Calu3 (cell line): ENCODE measurements at regions of chr6 and their contacts with region 1.

Region 1: DNA sequence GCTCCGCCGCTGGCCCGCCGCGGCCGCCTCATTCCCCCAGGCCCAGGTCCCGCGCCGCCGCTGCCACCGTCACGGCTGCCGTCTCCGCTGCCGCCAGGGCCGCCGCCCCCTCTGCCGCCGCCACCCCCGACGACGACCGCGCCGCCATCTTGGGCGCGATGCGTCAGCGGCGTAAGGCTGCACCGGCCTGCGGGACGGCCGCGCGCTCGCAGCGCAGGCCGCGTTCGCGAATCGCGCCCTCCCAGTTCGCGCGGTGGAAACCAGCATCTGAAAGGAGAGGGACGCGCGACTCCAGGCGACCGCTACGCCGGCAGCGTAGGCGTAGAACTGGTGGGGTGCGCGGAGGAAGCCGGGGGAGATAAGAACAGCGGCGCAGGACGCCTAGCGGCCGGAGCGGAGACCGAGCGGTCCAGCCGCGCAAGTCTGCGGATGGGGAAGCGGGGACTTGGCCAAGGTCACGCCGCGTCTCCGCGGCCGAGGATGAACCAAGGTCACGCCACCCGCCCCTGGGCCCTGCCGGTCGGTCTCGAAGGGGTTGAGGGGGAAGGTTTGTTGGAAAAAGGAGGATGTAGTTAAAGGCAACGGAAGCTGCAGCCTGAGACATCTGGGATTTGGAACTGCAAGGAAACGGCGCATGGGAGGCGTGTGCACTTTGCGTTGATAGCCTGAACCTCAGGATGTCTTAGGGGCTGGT is at the start of gene NUDT3:
- DNase-seq: peak; percentile 98
- H3K4me3 Mint-ChIP-seq: no peak within 1 kb of the TSS
- H3K27ac Mint-ChIP-seq: peak within 1 kb of the TSS; percentile 5
- H3K4me1 Mint-ChIP-seq: peaks cover 9% of the 10 kb centered on the region
- H3K27me3 Mint-ChIP-seq: no peaks in the 10 kb centered on the region
- CTCF ChIP-seq: peak; percentile 94
- total RNA-seq, gene NUDT3: 43.9 and 48.4 TPM in 2 replicates

Region 2: GRCh38 chr6:34248727-34249551 is 143.7 kb before region 1 on chr6 and contains the start of gene SMIM29:
- CTCF ChIA-PET with region 1: interaction called, 30 read pairs
- intact Hi-C with region 1: loop called (anchors 1 kb)
- DNase-seq: peak; percentile 100
- H3K4me3 Mint-ChIP-seq: peak within 1 kb of the TSS; percentile 81
- H3K27ac Mint-ChIP-seq: peak within 1 kb of the TSS; percentile 97
- H3K4me1 Mint-ChIP-seq: peaks cover 55% of the 10 kb centered on the region
- H3K27me3 Mint-ChIP-seq: no peaks in the 10 kb centered on the region
- CTCF ChIP-seq: peak; percentile 99
- total RNA-seq, gene SMIM29: 59.2 and 68.6 TPM in 2 replicates

Region 3: DNA sequence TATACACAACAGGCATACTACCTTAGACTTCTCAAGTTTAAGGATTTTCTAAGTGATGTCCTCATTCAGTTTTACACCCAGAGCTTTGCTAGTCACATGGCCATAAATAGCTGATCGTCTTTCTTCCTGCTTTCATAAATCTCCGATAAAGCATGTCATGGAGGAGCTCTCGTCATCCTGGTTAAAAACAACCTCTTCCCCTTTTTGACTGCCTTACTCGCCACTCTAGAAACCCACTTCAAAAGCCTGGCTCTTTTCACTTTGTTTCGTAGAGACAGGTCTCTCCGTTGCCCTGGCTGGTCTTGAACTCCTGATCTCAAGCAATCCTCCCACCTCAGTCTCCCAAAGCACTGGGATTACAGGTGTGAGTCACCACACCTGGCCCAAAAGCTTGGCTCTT is 76.9 kb before region 1 on chr6:
- CTCF ChIA-PET with region 1: interaction called, 3 read pairs
- intact Hi-C with region 1: loop called (anchors 5 kb)
- DNase-seq: no peak
- H3K4me3 Mint-ChIP-seq: no peak overlapping the region
- H3K27ac Mint-ChIP-seq: no peak overlapping the region
- H3K4me1 Mint-ChIP-seq: peaks cover 55% of the 10 kb centered on the region
- H3K27me3 Mint-ChIP-seq: no peaks in the 10 kb centered on the region
- CTCF ChIP-seq: no peak

Region 4: GRCh38 chr6:34350137-34350933 is 42.3 kb before region 1 on chr6:
- CTCF ChIA-PET with region 1: interaction called, 3 read pairs
- intact Hi-C with region 1: loop called (anchors 2 kb)
- DNase-seq: no peak
- H3K4me3 Mint-ChIP-seq: no peak overlapping the region
- H3K27ac Mint-ChIP-seq: no peak overlapping the region
- H3K4me1 Mint-ChIP-seq: peaks cover 27% of the 10 kb centered on the region
- H3K27me3 Mint-ChIP-seq: no peaks in the 10 kb centered on the region
- CTCF ChIP-seq: no peak